HepG2 (cell line): ENCODE measurements at regions of chr20 and their contacts with region 1.

Region 1: DNA sequence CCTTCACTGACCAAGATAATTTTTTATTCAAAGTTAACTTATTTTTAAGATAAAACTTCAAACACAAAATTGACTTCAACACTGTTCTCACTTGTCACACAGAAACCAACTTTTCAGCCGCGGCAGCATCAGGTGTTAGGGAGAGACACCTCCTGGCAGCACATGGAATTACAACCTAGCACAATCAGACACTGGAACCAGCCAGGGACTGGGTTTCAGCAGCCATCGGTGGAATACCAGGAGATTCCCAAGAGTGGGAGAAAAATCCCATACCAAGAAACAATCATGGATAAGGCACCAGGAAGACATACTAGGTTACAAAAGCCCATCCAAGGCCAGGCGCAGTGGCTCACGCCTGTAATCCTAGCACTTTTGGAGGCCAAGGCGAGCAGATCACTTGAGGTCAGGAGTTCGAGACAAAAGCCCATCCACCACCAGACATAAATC is 70.0 kb downstream of the SNX5 start:
- DNase-seq: peak; percentile 80
- ATAC-seq: peak; percentile 10; the same call in 2 of the 3 replicates
- H3K4me3 ChIP-seq: no peak overlapping the region
- H3K27ac ChIP-seq: no peak overlapping the region
- H3K4me1 ChIP-seq: peaks cover 52% of the 10 kb centered on the region
- H3K27me3 ChIP-seq: peaks cover 0 to 16% of the 10 kb centered on the region in 2 experiments; a peak in 4 of 5 replicates
- CTCF ChIP-seq: peak; percentile 98
- EP300 ChIP-seq: 0 out of 4 replicates have a peak, but pooled peaks of 1 of the 2 experiments have one; percentile 24
- POLR2A ChIP-seq: no peak
- RAD21 ChIP-seq: peak; percentile 99

Region 2: GRCh38 chr20:17654649-17655285 is 243.8 kb before region 1 on chr20:
- CTCF ChIA-PET with region 1: interaction called, 11 read pairs
- POLR2A ChIA-PET with region 1: interaction called, 3 read pairs
- in situ Hi-C with region 1: no loop called
- intact Hi-C with region 1: loop called (anchors 5 kb)
- DNase-seq: peak; percentile 53
- ATAC-seq: no peak
- H3K4me3 ChIP-seq: no peak overlapping the region
- H3K27ac ChIP-seq: no peak overlapping the region
- H3K4me1 ChIP-seq: no peaks in the 10 kb centered on the region
- H3K27me3 ChIP-seq: no peaks in the 10 kb centered on the region
- CTCF ChIP-seq: peak; percentile 63
- EP300 ChIP-seq: no peak
- POLR2A ChIP-seq: no peak
- RAD21 ChIP-seq: no peak; the same call in 1 of the 2 replicates

Region 3: DNA sequence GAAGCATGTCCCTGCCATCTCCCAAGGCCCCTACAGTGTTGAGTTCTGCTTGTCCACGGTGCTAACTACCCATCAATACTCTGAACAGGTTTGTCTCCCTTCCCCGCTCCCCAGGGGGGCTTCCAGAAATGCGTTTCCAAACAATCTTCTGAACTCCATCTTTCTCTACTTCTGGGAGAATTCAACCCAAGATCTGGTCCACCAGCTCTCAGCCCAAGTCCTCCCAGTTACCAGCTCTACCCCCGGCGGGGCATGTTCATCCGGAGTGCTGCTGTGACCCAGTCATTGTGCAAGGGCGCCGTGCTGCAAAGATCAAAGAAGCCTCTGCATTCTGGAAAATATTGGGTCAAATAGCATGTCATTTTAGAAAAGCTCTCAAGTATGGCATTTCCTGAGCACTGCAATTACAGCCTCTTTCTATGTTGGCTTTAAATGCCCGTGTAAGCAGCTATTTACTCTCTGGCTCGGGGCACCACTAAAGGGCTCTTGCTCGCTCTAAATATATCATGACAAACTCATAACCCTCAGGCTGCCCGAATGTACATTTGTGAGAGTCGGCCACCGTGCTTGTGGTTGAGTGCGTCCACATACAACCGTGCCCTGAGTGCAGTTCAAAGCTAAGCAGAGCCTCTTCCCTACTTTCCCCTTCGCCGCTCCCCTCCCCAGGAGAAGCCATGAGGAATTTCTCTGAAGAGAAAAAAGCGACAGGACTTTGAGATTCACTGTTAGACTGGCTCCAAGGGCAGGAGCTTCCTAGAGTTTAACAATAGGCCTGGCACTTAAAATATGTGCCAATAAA is 127.2 kb before region 1 on chr20:
- CTCF ChIA-PET with region 1: no interaction called
- POLR2A ChIA-PET with region 1: interaction called, 4 read pairs
- in situ Hi-C with region 1: no loop called
- intact Hi-C with region 1: loop called (anchors 1 kb)
- DNase-seq: peak; percentile 97
- ATAC-seq: peak; percentile 93
- H3K4me3 ChIP-seq: peak overlapping the region; percentile 26 to 59 (median 39)
- H3K27ac ChIP-seq: peak overlapping the region; percentile 79
- H3K4me1 ChIP-seq: peaks cover 39% of the 10 kb centered on the region
- H3K27me3 ChIP-seq: no peaks in the 10 kb centered on the region
- CTCF ChIP-seq: no peak
- EP300 ChIP-seq: peak; percentile 48 to 86; a peak in 1 of 4 replicates
- POLR2A ChIP-seq: peak in 1 of 2 experiments; percentile 52; a peak in 2 of 4 replicates
- RAD21 ChIP-seq: peak; percentile 22; the same call in 1 of the 2 replicates

Region 4: DNA sequence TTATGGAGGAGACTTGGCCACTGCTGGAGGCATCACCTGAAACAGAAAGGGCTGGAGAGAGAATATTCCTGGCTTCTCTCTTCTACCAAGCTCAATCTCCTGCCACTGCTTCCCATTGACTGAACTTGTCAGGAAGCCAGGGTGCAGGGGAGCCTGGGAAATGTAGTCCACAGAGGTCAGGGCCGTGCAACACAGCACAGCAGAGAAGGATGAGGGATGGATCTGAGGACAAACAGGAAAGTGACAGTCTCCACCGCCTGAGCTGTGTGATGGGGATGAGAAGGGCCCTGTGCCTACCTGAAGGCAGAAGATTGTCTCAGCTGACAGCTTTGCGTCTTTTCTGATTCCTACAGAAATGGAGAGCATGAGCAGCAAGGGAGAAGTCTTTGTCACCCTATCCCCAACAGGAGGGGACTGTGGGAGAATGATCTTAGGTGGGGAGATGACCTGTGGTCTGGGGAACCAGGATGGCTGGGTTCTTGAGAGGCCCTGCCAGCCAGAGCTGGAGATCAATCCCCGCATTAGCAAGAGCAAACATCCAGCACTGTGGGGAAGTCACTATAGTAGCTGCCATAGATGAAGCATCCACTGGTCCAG is 44.2 kb before region 1 on chr20:
- CTCF ChIA-PET with region 1: no interaction called
- POLR2A ChIA-PET with region 1: interaction called, 724 read pairs
- in situ Hi-C with region 1: no loop called
- intact Hi-C with region 1: loop called (anchors 1 kb)
- DNase-seq: peak; percentile 82
- ATAC-seq: peak; percentile 58
- H3K4me3 ChIP-seq: peak overlapping the region in 2 of 3 experiments; percentile 6 to 38; a peak in 2 of 6 replicates
- H3K27ac ChIP-seq: peak overlapping the region; percentile 21
- H3K4me1 ChIP-seq: peaks cover 76% of the 10 kb centered on the region
- H3K27me3 ChIP-seq: no peaks in the 10 kb centered on the region
- CTCF ChIP-seq: no peak
- EP300 ChIP-seq: 0 out of 4 replicates have a peak, but pooled peaks of 1 of the 2 experiments have one; percentile 21
- POLR2A ChIP-seq: no peak
- RAD21 ChIP-seq: peak; percentile 52

Region 5: DNA sequence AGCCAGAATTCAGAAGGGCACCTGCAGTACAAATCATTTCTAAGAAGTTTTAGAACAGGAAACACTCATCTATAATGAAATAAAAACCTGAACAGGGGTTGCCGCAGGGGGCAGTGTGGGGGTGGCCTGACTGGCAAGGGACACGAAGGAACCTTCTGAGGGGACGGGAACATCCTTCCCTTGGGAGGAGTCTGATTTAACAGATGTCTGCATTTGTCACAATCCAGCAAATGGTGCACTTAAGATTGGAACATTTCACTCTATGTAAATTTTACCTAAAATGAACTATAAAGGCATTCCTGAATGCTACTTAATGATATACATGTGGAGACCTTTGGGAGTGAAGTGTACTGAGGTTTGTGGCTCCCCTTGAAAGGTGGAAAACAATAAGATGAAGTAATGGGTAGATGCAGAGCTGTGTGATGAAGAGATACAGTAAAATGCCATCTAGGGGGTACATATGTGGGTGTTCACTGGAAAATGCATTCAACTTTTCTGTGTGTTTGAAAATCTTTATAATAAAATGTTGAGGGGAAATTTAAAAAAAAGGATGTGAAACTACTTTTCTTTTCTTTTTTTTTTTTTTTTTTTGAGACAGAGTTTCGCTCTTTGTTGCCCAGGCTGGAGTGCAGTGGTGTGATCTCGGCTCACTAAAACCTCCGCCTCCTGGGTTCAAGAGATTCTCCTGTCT is 19.5 kb before region 1 on chr20:
- CTCF ChIA-PET with region 1: interaction called, 3 read pairs
- POLR2A ChIA-PET with region 1: interaction called, 102 read pairs
- in situ Hi-C with region 1: no loop called
- intact Hi-C with region 1: loop called (anchors 1 kb)
- DNase-seq: no peak
- ATAC-seq: no peak
- H3K4me3 ChIP-seq: peak overlapping the region; percentile 30 to 61 (median 44)
- H3K27ac ChIP-seq: peak overlapping the region; percentile 78
- H3K4me1 ChIP-seq: peaks cover 98% of the 10 kb centered on the region
- H3K27me3 ChIP-seq: no peaks in the 10 kb centered on the region
- CTCF ChIP-seq: no peak
- EP300 ChIP-seq: no peak
- POLR2A ChIP-seq: no peak
- RAD21 ChIP-seq: no peak